ENCODE measurements at regions of chr17 and their contacts with region 1.

Region 1: DNA sequence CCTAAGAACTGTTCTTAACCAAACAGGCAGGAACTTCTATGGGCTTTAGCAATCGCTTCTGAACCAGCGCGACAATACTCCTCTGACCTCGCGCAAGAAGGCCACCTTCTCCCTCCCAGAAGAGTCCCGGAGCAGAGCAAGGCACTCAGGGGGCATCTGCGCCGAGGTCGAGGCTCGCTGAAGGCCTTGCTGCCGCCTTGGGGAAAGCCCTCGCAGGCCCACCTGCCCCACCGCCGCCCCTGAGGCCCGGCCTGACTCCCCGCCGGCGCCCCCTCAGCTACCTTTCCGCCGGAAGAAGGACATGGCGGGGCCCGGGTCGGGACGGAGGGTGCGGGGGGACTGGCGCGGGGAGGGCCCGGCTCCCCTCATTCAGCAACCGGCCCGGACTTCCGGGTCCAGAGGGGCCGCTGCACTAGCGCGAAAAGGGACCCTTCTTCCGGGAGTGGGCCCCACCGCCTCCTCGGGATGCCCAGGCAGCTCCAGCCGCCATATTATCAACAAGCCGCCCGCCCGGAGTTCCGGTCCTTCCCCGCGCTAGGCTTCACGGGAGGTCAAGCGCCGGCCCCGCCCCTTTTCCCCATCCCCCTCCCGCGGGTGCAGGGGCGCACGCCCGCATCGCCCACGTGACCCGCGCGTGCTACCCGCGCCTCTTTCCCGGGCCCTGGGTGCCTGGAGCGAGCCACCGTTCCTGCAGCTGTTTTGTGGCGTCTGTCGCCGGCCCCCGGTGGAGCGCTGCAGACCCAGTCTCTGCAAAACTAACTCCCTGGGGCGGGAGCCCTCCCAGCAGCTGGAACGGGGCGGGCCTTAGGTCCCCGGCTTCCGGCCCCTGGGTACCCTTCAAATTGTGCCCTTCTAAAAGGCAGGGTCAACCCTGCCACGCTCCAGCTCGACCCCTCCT is at the start of gene AKAP10:
- DNase-seq: peak; percentile 97
- H3K4me3 Mint-ChIP-seq: peak within 1 kb of the TSS; percentile 93
- H3K27ac Mint-ChIP-seq: peak within 1 kb of the TSS; percentile 96
- H3K4me1 Mint-ChIP-seq: peaks cover 45% of the 10 kb centered on the region
- H3K27me3 Mint-ChIP-seq: no peaks in the 10 kb centered on the region
- total RNA-seq, gene AKAP10: 30.3 to 30.4 TPM

Region 2: DNA sequence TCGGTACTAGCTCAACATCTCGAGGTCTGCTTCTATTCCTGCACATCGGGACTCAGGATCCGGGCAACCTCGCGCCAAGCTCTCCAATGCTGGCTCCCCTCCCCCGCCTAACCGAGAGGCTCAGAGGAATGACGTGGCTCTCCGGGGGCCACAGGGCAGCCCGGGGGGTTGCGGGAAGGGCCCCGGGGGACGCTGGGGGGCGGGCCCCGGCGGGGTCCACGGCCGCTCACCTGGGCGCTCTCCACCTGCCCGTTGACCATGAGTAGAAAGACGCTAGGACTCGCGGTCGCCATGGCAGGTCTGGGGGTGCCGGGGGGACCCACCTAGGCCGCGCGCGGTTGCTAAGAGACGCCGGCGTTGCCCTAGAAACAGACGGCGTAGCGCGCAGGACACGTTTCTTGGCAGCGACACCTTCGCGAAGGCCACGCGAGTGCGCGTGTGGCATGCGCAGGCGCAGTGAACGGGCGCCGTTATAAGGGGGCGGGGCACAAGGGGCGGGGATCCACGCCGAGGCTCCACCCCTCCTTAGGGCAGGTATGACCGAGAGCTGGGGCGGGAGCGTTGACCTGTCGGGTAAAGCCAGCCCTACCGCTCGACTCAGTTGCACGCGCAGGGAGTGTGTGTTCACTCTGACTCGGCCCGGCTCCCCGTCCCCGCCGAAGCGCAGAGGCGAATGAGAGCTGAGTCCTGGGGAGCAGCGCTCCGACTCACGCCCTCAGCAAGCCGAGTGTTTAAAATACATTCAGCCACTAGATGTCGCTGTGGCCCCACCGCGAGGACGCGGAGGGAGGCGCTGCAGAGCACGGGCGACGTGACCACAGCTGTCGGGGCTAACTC is 615.1 kb before region 1 on chr17 and contains the start of gene B9D1:
- CTCF ChIA-PET with region 1: no interaction called
- intact Hi-C with region 1: loop called (anchors 10 kb)
- DNase-seq: peak; percentile 93
- H3K4me3 Mint-ChIP-seq: peak within 1 kb of the TSS; percentile 87
- H3K27ac Mint-ChIP-seq: peak within 1 kb of the TSS; percentile 33
- H3K4me1 Mint-ChIP-seq: peaks cover 5% of the 10 kb centered on the region
- H3K27me3 Mint-ChIP-seq: peaks cover 2% of the 10 kb centered on the region
- total RNA-seq, gene B9D1: 8.7 TPM

Region 3: DNA sequence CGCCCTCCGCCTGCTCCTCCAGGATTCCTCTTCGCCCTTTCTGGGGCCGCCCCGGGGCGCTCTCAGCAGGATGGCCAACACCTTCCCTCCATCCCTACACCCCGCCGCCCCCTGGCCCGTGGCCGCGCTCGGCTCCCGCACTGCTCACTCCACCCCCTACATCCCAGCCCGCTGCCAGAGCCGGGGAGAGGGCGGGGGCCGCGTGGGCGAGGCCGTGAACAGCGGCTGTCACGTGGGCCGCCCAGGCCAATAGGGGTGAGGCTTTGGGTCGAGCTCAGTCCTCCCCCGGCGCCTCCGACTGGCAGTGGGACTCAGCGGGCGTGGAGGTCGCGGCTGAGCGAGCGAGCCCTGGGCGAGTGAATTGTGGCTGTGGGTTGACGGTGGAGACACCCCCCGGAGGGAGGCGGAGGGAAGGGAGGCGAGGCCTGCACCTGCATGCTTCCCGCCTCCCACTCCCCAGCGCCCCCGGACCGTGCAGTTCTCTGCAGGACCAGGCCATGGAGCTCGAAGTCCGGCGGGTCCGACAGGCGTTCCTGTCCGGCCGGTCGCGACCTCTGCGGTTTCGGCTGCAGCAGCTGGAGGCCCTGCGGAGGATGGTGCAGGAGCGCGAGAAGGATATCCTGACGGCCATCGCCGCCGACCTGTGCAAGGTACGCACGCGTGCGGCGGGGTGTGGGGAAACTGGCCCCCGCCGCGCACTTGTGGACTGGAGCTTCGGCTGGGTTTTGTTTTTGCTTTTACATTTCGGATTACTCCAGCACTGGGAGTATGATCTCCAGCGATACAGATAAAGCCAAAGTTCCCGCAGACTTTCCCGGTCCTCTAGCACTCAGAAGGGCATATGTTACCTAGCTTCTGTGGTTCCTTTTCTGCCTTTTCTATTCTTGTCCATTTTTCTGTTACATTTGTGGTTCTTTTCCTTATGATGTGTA is 328.8 kb before region 1 on chr17 and contains the start of gene ALDH3A2:
- CTCF ChIA-PET with region 1: no interaction called
- intact Hi-C with region 1: loop called (anchors 2 kb)
- DNase-seq: peak; percentile 94
- H3K4me3 Mint-ChIP-seq: peak within 1 kb of the TSS; percentile 90
- H3K27ac Mint-ChIP-seq: peak within 1 kb of the TSS; percentile 73
- H3K4me1 Mint-ChIP-seq: peaks cover 32% of the 10 kb centered on the region
- H3K27me3 Mint-ChIP-seq: no peaks in the 10 kb centered on the region
- total RNA-seq, gene ALDH3A2: 21.0 to 22.3 TPM

Region 4: DNA sequence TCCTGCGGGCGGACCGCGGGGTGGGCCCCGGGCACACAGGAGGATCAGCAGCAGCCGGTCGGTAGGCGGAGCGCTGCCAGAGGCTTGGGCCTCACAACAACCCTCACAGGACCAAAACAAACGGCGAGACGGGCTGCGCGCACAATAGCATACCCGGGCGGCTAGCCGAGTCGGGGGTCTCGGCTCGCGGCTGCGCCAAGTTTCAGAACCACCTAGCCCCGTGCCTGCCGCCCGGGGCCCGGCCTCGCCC is 110.6 kb before region 1 on chr17:
- CTCF ChIA-PET with region 1: no interaction called
- intact Hi-C with region 1: loop called (anchors 1 kb)
- DNase-seq: peak; percentile 69
- H3K4me3 Mint-ChIP-seq: peak overlapping the region; percentile 80
- H3K27ac Mint-ChIP-seq: peak overlapping the region; percentile 50
- H3K4me1 Mint-ChIP-seq: peaks cover 31% of the 10 kb centered on the region
- H3K27me3 Mint-ChIP-seq: no peaks in the 10 kb centered on the region

Region 5: DNA sequence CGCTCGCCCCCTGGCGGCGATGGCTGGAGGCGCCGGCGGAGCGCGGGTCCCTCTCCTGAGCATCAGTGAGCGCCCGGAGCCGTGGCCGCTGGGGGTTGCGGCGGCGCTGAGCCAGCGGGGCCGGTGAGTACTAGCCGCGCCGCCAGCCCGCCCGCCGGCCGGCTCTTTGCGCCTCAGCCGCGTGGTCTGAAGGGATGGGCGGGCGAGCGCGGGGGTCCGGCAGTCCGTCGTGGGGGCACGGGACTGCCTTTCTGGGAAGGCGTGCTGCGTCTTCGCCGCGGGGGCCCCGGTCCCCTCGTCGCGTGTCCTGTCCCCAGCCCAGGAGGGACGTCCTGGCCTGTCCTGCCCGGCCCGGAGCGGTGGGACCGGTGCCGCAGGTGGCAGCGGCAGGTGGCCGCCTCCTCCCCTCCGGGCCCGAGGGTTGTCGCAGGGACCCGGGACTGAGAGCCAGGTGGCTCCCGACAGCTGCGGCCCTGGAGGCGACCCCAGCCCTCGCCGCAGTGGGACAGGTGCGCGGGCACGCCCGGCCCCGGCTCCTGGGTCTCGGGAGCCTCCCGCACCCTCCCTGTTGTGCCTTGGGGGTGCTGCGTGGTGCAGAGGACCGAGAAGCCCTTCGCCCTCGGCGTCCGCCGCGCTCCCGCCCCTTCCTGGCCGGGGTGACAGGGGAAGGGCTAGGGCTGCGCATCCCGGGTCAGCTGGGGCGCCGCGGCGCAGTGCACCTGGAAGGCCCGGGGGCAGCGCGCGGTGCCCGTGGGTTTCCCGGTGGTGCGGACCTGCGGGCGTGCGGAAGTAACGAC is 31.9 kb after region 1 on chr17 and contains the start of gene SPECC1:
- CTCF ChIA-PET with region 1: interaction called, 5 read pairs
- intact Hi-C with region 1: loop called (anchors 1 kb)
- DNase-seq: peak; percentile 87
- H3K4me3 Mint-ChIP-seq: peak within 1 kb of the TSS; percentile 82
- H3K27ac Mint-ChIP-seq: no peak within 1 kb of the TSS
- H3K4me1 Mint-ChIP-seq: peaks cover 8% of the 10 kb centered on the region
- H3K27me3 Mint-ChIP-seq: peaks cover 49% of the 10 kb centered on the region
- total RNA-seq, gene SPECC1: 13.7 to 17.4 TPM

Measured in activated naive CD4-positive, alpha-beta T cell treated with anti-CD3 and anti-CD28 coated beads for 36 hours (primary cell).